G401 (cell line): ENCODE measurements at regions of chr10 and their contacts with region 1.

Region 1: GRCh38 chr10:100817268-100817839 is 72.0 kb downstream of the PAX2 start:
- DNase-seq: no peak

Region 2: DNA sequence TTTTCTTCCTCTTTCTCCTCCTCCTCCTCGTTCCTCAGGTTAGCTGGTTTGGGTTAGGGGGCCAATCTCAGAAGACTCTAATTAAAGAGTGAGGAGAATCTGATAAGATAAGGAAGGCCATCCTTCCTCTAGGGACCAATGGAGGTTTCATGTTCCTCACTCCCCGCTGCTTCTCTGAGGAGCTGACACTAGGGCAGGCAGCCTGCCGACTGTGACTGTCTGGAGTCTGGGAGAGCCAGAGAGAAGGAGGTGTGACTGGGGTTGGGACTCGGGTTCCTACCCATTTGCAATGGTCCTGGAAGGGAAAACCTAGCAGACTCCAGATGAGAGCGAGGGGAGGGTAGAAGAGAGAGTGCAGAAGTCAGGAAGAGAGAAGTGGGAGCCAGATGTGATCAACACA is 56.6 kb before region 1 on chr10:
- in situ Hi-C with region 1: loop called (anchors 5 kb)
- DNase-seq: no peak

Region 3: DNA sequence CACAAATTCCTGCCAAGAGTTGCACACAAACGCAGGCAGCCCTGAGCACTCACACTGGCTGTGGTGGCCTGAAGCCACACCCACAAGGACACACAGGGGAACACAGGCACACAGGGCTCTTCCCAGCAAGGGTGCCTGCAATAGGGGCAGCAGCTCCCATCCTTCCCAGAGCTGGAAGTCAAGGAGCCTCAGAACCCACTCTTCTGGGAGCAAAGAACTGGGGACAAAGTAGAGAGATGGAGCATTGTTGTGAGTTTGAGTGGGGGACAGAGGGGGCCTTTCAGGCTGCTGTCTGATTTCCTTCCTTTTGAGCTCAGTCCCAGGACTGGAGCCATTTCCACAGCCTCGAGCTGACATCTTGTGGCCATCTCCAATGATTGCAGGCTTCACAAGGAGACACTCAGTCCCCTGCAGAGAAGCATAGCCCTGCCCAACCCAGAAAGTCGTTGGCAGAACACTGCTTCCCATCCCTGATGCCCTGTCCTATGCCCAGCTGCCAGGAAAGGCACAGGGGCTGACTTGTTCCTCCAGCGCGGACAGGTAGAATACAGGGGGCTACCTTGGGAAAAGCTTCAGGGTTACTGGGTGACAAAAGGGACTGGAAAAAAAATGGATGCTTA is 61.0 kb after region 1 on chr10:
- in situ Hi-C with region 1: no loop called
- DNase-seq: peak; percentile 67